Psoas muscle (tissue), 8 donors: ENCODE measurements at regions of chr3 and their contacts with region 1.

Region 1: GRCh38 chr3:189621948-189622603 is 9.1 kb upstream of the TP63 start:
- DNase-seq: peak; percentile 65 to 85
- ATAC-seq: peak; percentile 88 to 94 (median 92)
- H3K4me3 ChIP-seq: peak overlapping the region; percentile 43
- H3K27ac ChIP-seq: peak overlapping the region; percentile 91
- H3K4me1 ChIP-seq: peaks cover 35% of the 10 kb centered on the region
- H3K27me3 ChIP-seq: no peaks in the 10 kb centered on the region
- CTCF ChIP-seq: no peak

Region 2: GRCh38 chr3:189262746-189263145 is 359.3 kb before region 1 on chr3:
- intact Hi-C with region 1: loop called in 1 of 2 experiments (anchors 5 kb)
- DNase-seq: peak; percentile 56 to 74
- ATAC-seq: peak; percentile 79 to 89 (median 84)
- H3K4me3 ChIP-seq: no peak overlapping the region
- H3K27ac ChIP-seq: peak overlapping the region; percentile 80
- H3K4me1 ChIP-seq: peaks cover 35% of the 10 kb centered on the region
- H3K27me3 ChIP-seq: no peaks in the 10 kb centered on the region
- CTCF ChIP-seq: no peak

Region 3: GRCh38 chr3:189563866-189564563 is 58.1 kb before region 1 on chr3:
- intact Hi-C with region 1: loop called in 1 of 2 experiments (anchors 2 kb)
- DNase-seq: no peak
- ATAC-seq: peak; percentile 79 to 97 (median 92)
- H3K4me3 ChIP-seq: no peak overlapping the region
- H3K27ac ChIP-seq: peak overlapping the region; percentile 74
- H3K4me1 ChIP-seq: peaks cover 4% of the 10 kb centered on the region
- H3K27me3 ChIP-seq: no peaks in the 10 kb centered on the region
- CTCF ChIP-seq: no peak